HepG2 (cell line): ENCODE measurements at regions of chr5 and their contacts with region 1.

Region 1: DNA sequence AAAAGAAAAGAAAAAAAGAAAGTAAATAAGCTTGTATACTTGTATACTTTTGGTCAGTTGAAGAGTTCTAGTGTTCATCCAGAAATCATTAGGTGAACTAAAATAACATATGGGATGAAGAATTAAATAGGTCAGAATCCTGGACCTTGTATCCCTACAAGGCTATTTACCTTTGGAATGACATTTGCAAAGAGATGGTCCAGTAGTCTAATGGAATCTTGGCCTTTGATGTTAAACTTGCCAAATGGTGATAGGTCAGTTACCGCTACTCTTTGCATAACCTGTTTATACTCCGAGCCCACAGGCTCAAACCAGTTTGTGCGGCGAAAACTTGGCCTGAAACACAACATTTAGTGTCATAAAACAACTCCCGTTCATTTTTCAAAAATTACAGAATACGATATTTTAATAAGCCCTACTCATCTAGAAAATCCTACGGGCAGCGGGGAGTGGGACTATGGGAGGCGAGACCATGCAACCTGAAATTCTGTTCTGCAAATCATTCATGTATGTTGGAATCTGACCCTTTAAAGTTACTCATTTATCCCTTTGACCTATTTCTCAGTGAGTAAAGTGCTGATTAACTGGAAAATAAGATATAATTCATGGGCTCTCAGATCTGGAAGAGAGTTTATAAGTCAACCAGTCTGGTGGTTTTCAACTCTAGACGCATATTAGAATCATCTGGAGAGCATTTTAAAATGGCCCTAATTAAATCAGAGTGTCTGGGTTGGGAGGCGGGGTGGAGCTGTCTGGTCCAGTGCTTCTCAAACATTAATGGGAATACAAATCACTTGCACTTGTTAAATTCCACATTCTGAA is 38.6 kb downstream of the DMGDH start:
- DNase-seq: peak; percentile 92
- ATAC-seq: peak; percentile 97
- H3K4me3 ChIP-seq: peak overlapping the region; percentile 36 to 57 (median 43); a peak in 5 of 6 replicates
- H3K27ac ChIP-seq: peak overlapping the region; percentile 95
- H3K4me1 ChIP-seq: peaks cover 29% of the 10 kb centered on the region
- H3K27me3 ChIP-seq: no peaks in the 10 kb centered on the region
- CTCF ChIP-seq: no peak
- EP300 ChIP-seq: peak; percentile 56 to 86; a peak in 3 of 4 replicates
- POLR2A ChIP-seq: no peak
- RAD21 ChIP-seq: no peak

Region 2: DNA sequence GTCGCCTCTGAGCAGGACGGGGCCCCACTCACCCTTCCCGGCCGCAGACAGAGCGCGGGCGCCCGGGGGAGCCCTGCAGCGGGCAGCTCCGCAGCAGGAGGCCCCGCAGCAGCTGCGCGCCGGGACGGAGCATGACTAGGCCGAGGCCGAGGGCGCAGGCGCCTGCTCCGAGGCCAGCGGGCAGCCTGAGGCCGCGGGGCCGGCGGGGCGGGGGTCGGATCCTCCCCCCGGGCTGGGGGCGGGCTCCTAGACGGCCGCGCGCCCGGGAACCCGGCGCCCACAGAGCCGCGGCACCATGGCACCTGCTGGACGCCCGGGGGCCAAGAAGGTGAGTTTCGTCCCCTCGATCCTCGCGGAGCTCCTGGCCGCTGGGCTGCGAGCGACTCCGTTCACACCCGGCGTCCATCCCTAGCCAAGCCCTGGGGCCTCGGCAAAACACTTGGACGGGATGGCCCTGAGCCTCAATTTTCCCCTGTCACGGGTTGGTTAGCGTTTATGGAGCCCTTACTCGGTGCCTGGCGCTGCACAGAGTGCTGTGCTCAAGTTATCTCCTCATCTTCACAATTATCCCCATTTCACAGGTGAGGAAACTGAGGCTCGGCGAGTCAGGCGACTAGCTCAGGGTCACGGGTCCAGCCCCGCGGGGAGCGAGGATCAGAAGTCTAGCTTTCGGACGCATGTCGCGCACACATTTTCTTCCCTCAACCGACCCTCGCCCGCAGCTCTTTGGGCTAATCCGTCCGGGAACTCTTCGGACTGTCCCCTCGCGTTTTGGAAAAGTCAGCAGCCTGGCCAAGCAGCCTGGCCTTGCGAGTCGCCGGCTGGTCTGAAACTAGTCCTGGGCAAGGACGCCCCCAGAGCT is 38.8 kb after region 1 on chr5 and contains the starts of genes BHMT2 and DMGDH:
- CTCF ChIA-PET with region 1: no interaction called
- POLR2A ChIA-PET with region 1: interaction called, 3 read pairs
- in situ Hi-C with region 1: no loop called
- intact Hi-C with region 1: loop called (anchors 2 kb)
- DNase-seq: peak; percentile 23
- ATAC-seq: peak; percentile 99
- H3K4me3 ChIP-seq: peak within 1 kb of the TSS; percentile 52 to 76 (median 67)
- H3K27ac ChIP-seq: peak within 1 kb of the TSS; percentile 70
- H3K4me1 ChIP-seq: peaks cover 50% of the 10 kb centered on the region
- H3K27me3 ChIP-seq: no peaks in the 10 kb centered on the region
- CTCF ChIP-seq: peak; percentile 15; the same call in 1 of the 2 replicates
- EP300 ChIP-seq: no peak
- POLR2A ChIP-seq: peak; percentile 59 to 63
- RAD21 ChIP-seq: peak; percentile 55
- total RNA-seq, gene BHMT2: 18.8 and 24.1 TPM in 2 replicates
- total RNA-seq, gene DMGDH: 4.6 and 7.9 TPM in 2 replicates